ENCODE measurements at regions of chr16 and their contacts with region 1.

Region 1: GRCh38 chr16:14658063-14658462 is 25.3 kb downstream of the BFAR start:
- DNase-seq: peak; percentile 67
- H3K4me3 ChIP-seq: no peak overlapping the region
- H3K27ac ChIP-seq: no peak overlapping the region
- H3K4me1 ChIP-seq: no peaks in the 10 kb centered on the region
- H3K27me3 ChIP-seq: no peaks in the 10 kb centered on the region
- CTCF ChIP-seq: no peak

Region 2: GRCh38 chr16:14510939-14511799 is 146.9 kb before region 1 on chr16:
- CTCF ChIA-PET with region 1: no interaction called
- dilution Hi-C with region 1: no loop called
- in situ Hi-C with region 1: no loop called
- intact Hi-C with region 1: no loop called
- DNase-seq: peak; percentile 95
- H3K4me3 ChIP-seq: no peak overlapping the region
- H3K27ac ChIP-seq: peak overlapping the region; percentile 86
- H3K4me1 ChIP-seq: peaks cover 31% of the 10 kb centered on the region
- H3K27me3 ChIP-seq: no peaks in the 10 kb centered on the region
- CTCF ChIP-seq: no peak

Region 3: DNA sequence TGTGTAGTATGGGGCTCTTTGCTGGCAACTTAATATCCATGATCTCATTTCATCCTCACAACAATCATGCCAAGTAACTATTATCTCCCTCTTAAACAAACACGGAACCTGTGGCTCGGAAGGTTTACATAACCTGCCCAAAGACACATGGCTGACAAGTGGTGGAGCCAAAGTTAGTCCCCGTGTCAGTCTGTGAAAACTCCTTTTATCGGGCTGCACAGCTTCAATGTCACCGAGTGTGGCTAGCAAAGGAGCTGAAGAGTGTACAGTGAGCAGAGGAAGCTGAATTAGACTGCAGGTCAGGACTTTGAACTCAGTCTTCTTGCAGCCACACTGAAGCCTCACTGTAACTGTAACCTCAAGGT is 108.3 kb before region 1 on chr16:
- CTCF ChIA-PET with region 1: no interaction called
- dilution Hi-C with region 1: no loop called
- in situ Hi-C with region 1: no loop called
- intact Hi-C with region 1: no loop called
- DNase-seq: no peak
- H3K4me3 ChIP-seq: no peak overlapping the region
- H3K27ac ChIP-seq: no peak overlapping the region
- H3K4me1 ChIP-seq: no peaks in the 10 kb centered on the region
- H3K27me3 ChIP-seq: no peaks in the 10 kb centered on the region
- CTCF ChIP-seq: no peak

Region 4: DNA sequence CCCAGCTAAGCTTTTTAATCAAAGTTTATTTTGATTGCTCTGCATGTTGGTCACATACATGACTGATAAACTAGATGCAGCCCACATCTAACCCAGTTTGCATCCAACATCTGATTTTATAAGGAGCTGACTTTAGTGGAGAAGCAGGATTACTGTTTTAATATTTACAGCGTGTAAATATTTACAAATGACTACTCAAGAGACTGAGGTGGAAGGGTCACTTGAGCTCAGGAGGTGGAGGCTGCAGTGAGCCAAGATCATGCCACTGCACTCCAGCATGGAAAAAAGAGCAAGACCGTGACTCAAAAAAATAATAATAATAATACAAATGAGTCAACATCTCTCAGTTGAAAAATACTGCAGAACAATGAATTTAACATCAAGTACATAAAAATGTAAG is 78.8 kb before region 1 on chr16:
- CTCF ChIA-PET with region 1: no interaction called
- dilution Hi-C with region 1: loop called (anchors 5 kb)
- in situ Hi-C with region 1: no loop called
- intact Hi-C with region 1: no loop called
- DNase-seq: no peak
- H3K4me3 ChIP-seq: no peak overlapping the region
- H3K27ac ChIP-seq: no peak overlapping the region
- H3K4me1 ChIP-seq: no peaks in the 10 kb centered on the region
- H3K27me3 ChIP-seq: no peaks in the 10 kb centered on the region
- CTCF ChIP-seq: no peak

Measured in mammary epithelial cell (primary cell).